ENCODE measurements at regions of chr7 and their contacts with region 1.

Region 1: GRCh38 chr7:129224251-129225205 is at the start of gene AHCYL2:
- DNase-seq: peak; percentile 93 to 98 (median 95)
- H3K4me3 ChIP-seq: peak within 1 kb of the TSS; percentile 85
- H3K4me3 Mint-ChIP-seq: peak within 1 kb of the TSS; percentile 92 to 99 (median 96)
- H3K27ac ChIP-seq: peak within 1 kb of the TSS; percentile 88
- H3K27ac Mint-ChIP-seq: peak within 1 kb of the TSS; percentile 81 to 100 (median 97)
- H3K4me1 ChIP-seq: peaks cover 17% of the 10 kb centered on the region
- H3K4me1 Mint-ChIP-seq: peaks cover 23 to 47% (median 35%) of the 10 kb centered on the region in 3 donors
- H3K27me3 ChIP-seq: no peaks in the 10 kb centered on the region
- H3K27me3 Mint-ChIP-seq: no peaks in the 10 kb centered on the region
- total RNA-seq, gene AHCYL2: 8.2 to 8.4 TPM

Region 2: GRCh38 chr7:129258649-129259389 is 34.3 kb after region 1 on chr7:
- CTCF ChIA-PET with region 1: interaction called, 4 read pairs
- POLR2A ChIA-PET with region 1: interaction called, 11 read pairs
- DNase-seq: no peak
- H3K4me3 ChIP-seq: no peak overlapping the region
- H3K4me3 Mint-ChIP-seq: peak overlapping the region; percentile 25 to 81 (median 67)
- H3K27ac ChIP-seq: no peak overlapping the region
- H3K27ac Mint-ChIP-seq: peak overlapping the region in 1 of 8 donors; percentile 67
- H3K4me1 ChIP-seq: peaks cover 8% of the 10 kb centered on the region
- H3K4me1 Mint-ChIP-seq: peaks cover 23 to 31% (median 24%) of the 10 kb centered on the region in 3 donors
- H3K27me3 ChIP-seq: no peaks in the 10 kb centered on the region
- H3K27me3 Mint-ChIP-seq: no peaks in the 10 kb centered on the region